CD8-positive, alpha-beta memory T cell (primary cell): ENCODE measurements at regions of chr5 and their contacts with region 1.

Region 1: GRCh38 chr5:143403593-143404415 is at the start of gene NR3C1:
- DNase-seq: peak; percentile 82 to 92 (median 90)
- H3K4me3 ChIP-seq: peak within 1 kb of the TSS; percentile 98
- H3K4me3 Mint-ChIP-seq: peak within 1 kb of the TSS; percentile 94 to 99 (median 97)
- H3K27ac ChIP-seq: peak within 1 kb of the TSS; percentile 92
- H3K27ac Mint-ChIP-seq: peak within 1 kb of the TSS; percentile 96 to 100 (median 99)
- H3K4me1 ChIP-seq: peaks cover 34% of the 10 kb centered on the region
- H3K4me1 Mint-ChIP-seq: peaks cover 43 to 47% (median 43%) of the 10 kb centered on the region in 3 donors
- H3K27me3 ChIP-seq: no peaks in the 10 kb centered on the region
- H3K27me3 Mint-ChIP-seq: no peaks in the 10 kb centered on the region
- total RNA-seq, gene NR3C1: 65.3 to 66.5 TPM

Region 2: DNA sequence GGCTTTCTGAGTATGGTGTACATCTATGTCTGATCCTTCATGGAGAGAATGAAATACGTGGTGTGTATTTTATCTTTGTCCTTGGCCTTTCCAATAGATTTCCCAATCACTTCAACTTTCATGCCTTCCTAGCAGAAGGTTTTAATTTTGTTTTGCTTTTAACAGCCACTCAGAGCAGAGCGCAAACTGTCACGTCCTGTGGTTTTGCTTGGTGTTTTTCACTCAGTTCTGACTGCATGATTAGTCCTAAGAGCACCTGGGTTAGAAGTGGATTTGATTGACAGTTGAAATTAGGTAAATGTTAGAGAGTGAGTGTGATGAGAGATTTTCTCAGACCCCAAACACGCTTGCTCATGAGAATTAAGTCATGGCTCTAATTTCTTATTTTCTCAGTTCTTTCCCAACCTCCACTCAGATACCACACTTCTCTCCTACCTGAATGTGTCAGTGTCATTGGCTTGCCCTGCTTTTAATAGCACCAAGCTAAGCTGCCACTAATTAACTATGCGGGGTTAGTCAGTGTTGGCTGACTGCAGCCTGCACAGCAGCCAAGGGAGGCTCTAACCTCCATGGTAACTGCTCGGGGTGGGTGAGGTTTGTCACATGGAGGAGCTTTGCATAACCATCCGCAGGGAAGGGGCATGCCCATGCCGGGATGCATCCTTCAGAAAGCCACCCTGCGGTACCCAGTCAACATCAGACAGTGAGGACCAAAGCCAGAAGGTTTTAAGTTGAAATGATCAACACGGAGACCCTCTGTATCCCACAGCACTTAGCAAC is 173.7 kb before region 1 on chr5:
- CTCF ChIA-PET with region 1: interaction called, 10 read pairs
- POLR2A ChIA-PET with region 1: interaction called, 11 read pairs
- DNase-seq: peak in 3 of 5 donors; percentile 33 to 62 (median 54)
- H3K4me3 ChIP-seq: peak overlapping the region; percentile 10
- H3K4me3 Mint-ChIP-seq: peak overlapping the region; percentile 7 to 89 (median 83)
- H3K27ac ChIP-seq: peak overlapping the region; percentile 27
- H3K27ac Mint-ChIP-seq: peak overlapping the region; percentile 50 to 98 (median 93)
- H3K4me1 ChIP-seq: peaks cover 24% of the 10 kb centered on the region
- H3K4me1 Mint-ChIP-seq: peaks cover 36 to 52% (median 40%) of the 10 kb centered on the region in 3 donors
- H3K27me3 ChIP-seq: no peaks in the 10 kb centered on the region
- H3K27me3 Mint-ChIP-seq: no peaks in the 10 kb centered on the region

Region 3: DNA sequence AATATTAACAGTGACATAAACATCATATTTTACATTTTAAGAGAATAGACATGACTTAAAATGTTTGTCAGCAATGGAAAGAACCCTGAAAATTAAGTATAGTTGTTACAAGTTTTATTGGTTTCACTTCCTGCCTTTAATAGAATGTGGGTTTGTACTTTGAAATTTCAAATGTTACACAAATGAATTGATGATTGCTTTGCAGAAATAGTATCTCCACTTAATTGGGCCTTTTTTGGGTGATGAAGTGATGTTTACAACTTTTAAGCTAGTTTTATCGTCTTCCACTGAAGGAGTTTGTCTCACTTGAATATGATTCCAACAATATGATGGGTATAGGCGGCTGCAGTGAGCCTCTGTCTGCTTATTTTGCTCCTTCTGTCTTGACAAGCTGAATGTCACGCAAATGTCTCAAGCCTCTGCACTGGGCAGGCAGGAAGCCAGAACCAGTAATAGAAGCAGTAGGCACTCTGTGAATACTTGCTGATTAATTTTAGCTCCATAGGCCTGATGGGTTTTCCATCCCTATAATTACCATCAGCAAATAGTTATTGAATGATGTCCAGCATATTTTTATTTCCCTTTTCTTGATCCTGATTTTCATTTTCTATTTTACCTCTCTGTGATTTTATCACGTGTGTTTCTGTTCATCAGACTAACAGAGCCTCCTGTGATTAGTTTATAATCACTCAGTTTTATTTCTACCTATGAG is 10.3 kb after region 1 on chr5:
- CTCF ChIA-PET with region 1: interaction called, 16 read pairs
- POLR2A ChIA-PET with region 1: interaction called, 24 read pairs
- DNase-seq: no peak
- H3K4me3 ChIP-seq: no peak overlapping the region
- H3K4me3 Mint-ChIP-seq: peak overlapping the region in 3 of 7 donors; percentile 23 to 59 (median 46)
- H3K27ac ChIP-seq: no peak overlapping the region
- H3K27ac Mint-ChIP-seq: peak overlapping the region in 4 of 8 donors; percentile 26 to 88 (median 46)
- H3K4me1 ChIP-seq: no peaks in the 10 kb centered on the region
- H3K4me1 Mint-ChIP-seq: peaks cover 31 to 75% (median 53%) of the 10 kb centered on the region in 3 donors
- H3K27me3 ChIP-seq: peaks cover 4% of the 10 kb centered on the region
- H3K27me3 Mint-ChIP-seq: peaks cover 0 to 4% of the 10 kb centered on the region in 2 donors

Region 4: DNA sequence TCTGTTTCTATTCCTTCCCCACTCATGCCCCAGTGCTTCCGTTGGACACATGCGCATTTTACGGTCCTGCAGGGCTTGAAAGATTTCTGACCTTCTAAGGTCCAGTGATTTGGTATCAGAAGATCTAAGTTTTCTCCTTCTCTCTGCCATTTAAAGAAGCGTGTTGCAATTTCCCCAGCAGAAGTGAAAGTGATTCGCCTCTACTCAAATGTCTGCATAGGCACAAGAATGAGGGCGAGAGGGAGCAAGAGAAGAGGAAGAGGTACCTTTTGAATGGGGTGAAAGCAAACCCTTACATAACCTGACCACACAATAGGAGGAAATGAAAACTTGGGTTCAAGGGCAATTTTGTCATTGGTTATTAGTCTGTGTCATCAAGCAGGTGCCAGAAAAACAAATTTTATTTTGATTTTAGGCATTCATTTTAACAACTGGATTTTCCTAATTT is 31.4 kb after region 1 on chr5:
- CTCF ChIA-PET with region 1: interaction called, 71 read pairs
- POLR2A ChIA-PET with region 1: interaction called, 123 read pairs
- DNase-seq: peak in 3 of 5 donors; percentile 44 to 57 (median 54)
- H3K4me3 ChIP-seq: peak overlapping the region; percentile 83
- H3K4me3 Mint-ChIP-seq: peak overlapping the region; percentile 84 to 96 (median 92)
- H3K27ac ChIP-seq: peak overlapping the region; percentile 54
- H3K27ac Mint-ChIP-seq: peak overlapping the region; percentile 72 to 99 (median 95)
- H3K4me1 ChIP-seq: peaks cover 19% of the 10 kb centered on the region
- H3K4me1 Mint-ChIP-seq: peaks cover 44 to 75% (median 64%) of the 10 kb centered on the region in 3 donors
- H3K27me3 ChIP-seq: no peaks in the 10 kb centered on the region
- H3K27me3 Mint-ChIP-seq: no peaks in the 10 kb centered on the region

Region 5: GRCh38 chr5:143824851-143825720 is 421.3 kb after region 1 on chr5:
- CTCF ChIA-PET with region 1: interaction called, 10 read pairs
- POLR2A ChIA-PET with region 1: interaction called, 4 read pairs
- DNase-seq: peak; percentile 64 to 87 (median 67)
- H3K4me3 ChIP-seq: no peak overlapping the region
- H3K4me3 Mint-ChIP-seq: no peak overlapping the region
- H3K27ac ChIP-seq: no peak overlapping the region
- H3K27ac Mint-ChIP-seq: no peak overlapping the region
- H3K4me1 ChIP-seq: peaks cover 13% of the 10 kb centered on the region
- H3K4me1 Mint-ChIP-seq: peaks cover 8 to 19% (median 10%) of the 10 kb centered on the region in 3 donors
- H3K27me3 ChIP-seq: no peaks in the 10 kb centered on the region
- H3K27me3 Mint-ChIP-seq: no peaks in the 10 kb centered on the region

Region 6: DNA sequence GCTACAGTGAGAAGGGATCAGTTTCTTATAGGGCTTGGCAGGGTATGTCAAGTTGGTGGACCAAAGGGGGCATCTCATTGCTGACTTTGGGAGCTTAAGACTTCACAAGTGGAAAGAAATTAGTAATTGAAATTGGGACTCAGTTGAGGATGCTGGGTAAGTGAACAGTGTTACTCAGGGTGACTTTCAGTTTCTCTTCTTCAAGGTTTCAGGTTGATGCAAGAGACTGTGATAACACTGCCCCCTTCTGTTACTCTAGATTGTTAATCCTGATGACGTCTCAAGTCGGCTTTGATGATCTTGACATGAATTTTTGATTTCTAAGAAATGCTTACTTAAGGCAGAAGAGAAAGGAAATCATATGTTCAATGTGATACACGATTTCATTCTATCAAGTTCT is 788.2 kb after region 1 on chr5:
- CTCF ChIA-PET with region 1: interaction called, 10 read pairs
- POLR2A ChIA-PET with region 1: interaction called, 17 read pairs
- DNase-seq: peak in 4 of 5 donors; percentile 17 to 81 (median 66)
- H3K4me3 ChIP-seq: peak overlapping the region; percentile 36
- H3K4me3 Mint-ChIP-seq: no peak overlapping the region
- H3K27ac ChIP-seq: no peak overlapping the region
- H3K27ac Mint-ChIP-seq: no peak overlapping the region
- H3K4me1 ChIP-seq: peaks cover 55% of the 10 kb centered on the region
- H3K4me1 Mint-ChIP-seq: peaks cover 0 to 23% (median 22%) of the 10 kb centered on the region in 3 donors
- H3K27me3 ChIP-seq: no peaks in the 10 kb centered on the region
- H3K27me3 Mint-ChIP-seq: no peaks in the 10 kb centered on the region